Heart left ventricle (tissue), 16 donors: ENCODE measurements at regions of chr3 and their contacts with region 1.

Region 1: DNA sequence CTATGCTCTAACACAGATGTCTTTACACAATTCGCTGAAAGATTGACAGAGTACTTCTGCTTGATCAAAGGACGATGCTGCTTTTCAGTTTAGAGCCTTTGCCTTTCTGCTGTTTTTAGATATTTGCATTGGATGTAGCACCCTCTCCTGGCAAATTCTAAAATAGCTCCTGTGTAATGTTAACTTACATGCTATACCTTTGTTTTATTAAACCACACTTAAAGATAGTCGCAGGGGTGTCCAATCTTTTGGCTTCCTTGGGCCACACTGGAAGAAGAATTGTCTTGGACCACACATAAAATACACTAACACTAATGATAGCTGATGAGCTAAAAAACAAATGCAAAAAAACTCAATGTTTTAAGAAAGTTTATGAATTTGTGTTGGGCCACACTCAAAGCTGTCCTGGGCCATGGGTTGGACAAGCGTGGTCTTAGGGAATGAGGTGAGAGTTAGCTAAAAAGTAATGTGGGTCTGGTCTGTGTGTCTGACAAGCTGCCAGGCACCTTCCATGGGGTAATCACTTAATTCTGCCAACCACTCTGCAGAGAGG is 62.9 kb downstream of the ATG7 start:
- DNase-seq: no peak
- ATAC-seq: peak in 3 of 4 donors; percentile 48 to 67 (median 59)
- H3K4me3 ChIP-seq: no peak overlapping the region
- H3K27ac ChIP-seq: no peak overlapping the region
- H3K4me1 ChIP-seq: no peaks in the 10 kb centered on the region
- H3K27me3 ChIP-seq: no peaks in the 10 kb centered on the region
- CTCF ChIP-seq: peak; percentile 42 to 75 (median 60)
- POLR2A ChIP-seq: no peak

Region 2: GRCh38 chr3:10764259-10765051 is 570.7 kb before region 1 on chr3:
- intact Hi-C with region 1: loop called in 4 of 10 experiments (anchors 5 to 10 kb)
- DNase-seq: no peak
- ATAC-seq: no peak
- H3K4me3 ChIP-seq: no peak overlapping the region
- H3K27ac ChIP-seq: no peak overlapping the region
- H3K4me1 ChIP-seq: no peaks in the 10 kb centered on the region
- H3K27me3 ChIP-seq: peaks cover 0 to 83% (median 17%) of the 10 kb centered on the region in 9 donors
- CTCF ChIP-seq: no peak
- POLR2A ChIP-seq: no peak

Region 3: GRCh38 chr3:11060500-11061251 is 274.5 kb before region 1 on chr3:
- intact Hi-C with region 1: loop called in 8 of 10 experiments (anchors 2 to 10 kb)
- DNase-seq: peak; percentile 49 to 80 (median 61)
- ATAC-seq: peak in 3 of 4 donors; percentile 78 to 82 (median 79)
- H3K4me3 ChIP-seq: peak overlapping the region in 6 of 12 donors; percentile 13 to 43 (median 33)
- H3K27ac ChIP-seq: no peak overlapping the region
- H3K4me1 ChIP-seq: peaks cover 0 to 10% (median 3%) of the 10 kb centered on the region in 12 donors
- H3K27me3 ChIP-seq: peaks cover 0 to 34% (median 0%) of the 10 kb centered on the region in 9 donors
- CTCF ChIP-seq: peak; percentile 79 to 95 (median 86)
- POLR2A ChIP-seq: no peak

Region 4: GRCh38 chr3:11155341-11156025 is 179.6 kb before region 1 on chr3:
- intact Hi-C with region 1: loop called in 7 of 10 experiments (anchors 2 to 10 kb)
- DNase-seq: peak; percentile 59 to 79 (median 70)
- ATAC-seq: peak; percentile 79 to 92 (median 88)
- H3K4me3 ChIP-seq: peak overlapping the region; percentile 42 to 68 (median 55)
- H3K27ac ChIP-seq: peak overlapping the region in 4 of 12 donors; percentile 46 to 72 (median 60)
- H3K4me1 ChIP-seq: peaks cover 0 to 65% (median 10%) of the 10 kb centered on the region in 12 donors
- H3K27me3 ChIP-seq: peaks cover 0 to 24% (median 10%) of the 10 kb centered on the region in 9 donors
- CTCF ChIP-seq: peak; percentile 39 to 80 (median 59)
- POLR2A ChIP-seq: no peak

Region 5: DNA sequence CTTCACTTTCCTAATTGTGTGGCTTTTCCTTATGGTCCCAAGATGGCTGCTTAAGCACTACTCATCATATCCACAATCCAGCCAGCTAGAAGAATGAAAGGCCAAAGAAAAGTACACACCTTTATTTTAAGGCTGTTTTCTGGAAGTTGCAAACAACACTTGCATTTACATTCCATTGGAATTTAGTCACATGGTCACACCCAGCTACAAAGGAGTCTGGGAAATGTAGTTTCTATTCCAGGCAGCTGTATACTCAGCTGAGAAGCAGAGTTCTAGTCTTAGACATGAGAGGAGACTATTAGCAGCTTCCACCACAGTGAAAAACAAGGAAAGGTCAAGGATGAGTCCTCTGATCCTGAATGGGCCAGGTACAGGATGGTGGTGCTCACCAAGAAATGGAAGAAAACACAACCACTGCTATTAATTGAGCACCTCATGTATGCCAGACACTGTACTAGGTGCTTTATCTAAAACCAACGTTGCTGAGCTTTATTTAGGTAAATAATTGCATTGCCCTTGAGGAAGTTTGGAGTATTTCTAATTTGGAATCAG is 90.9 kb before region 1 on chr3:
- intact Hi-C with region 1: loop called in 7 of 10 experiments (anchors 2 to 10 kb)
- DNase-seq: no peak
- ATAC-seq: no peak
- H3K4me3 ChIP-seq: no peak overlapping the region
- H3K27ac ChIP-seq: no peak overlapping the region
- H3K4me1 ChIP-seq: no peaks in the 10 kb centered on the region
- H3K27me3 ChIP-seq: no peaks in the 10 kb centered on the region
- CTCF ChIP-seq: no peak
- POLR2A ChIP-seq: no peak